Right ventricle myocardium inferior (tissue), 1 donor: ENCODE measurements at regions of chr4 and their contacts with region 1.

Region 1: DNA sequence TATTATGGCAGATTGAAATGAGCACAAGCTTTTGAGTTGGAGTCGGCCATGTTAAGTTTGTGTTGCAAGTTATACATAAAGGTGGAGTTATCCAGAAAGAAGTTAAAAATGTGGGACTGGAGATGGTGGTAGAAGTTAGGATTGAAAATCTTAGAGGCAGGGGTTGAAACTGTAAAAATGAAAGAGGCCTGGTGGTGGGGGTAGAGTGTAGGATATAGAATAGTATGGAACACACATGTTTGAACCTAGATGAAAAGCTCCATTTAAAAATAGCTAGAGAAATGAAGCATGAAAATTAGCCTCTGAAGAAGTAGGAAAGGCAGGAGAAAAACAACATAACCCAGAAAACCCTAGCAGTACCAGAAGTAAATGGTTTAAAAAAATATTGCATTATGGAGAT is 131.8 kb upstream of the ENPEP start:
- DNase-seq: no peak
- ATAC-seq: no peak

Region 2: GRCh38 chr4:110106928-110107296 is 237.2 kb before region 1 on chr4:
- intact Hi-C with region 1: no loop called
- DNase-seq: no peak
- ATAC-seq: no peak

Region 3: GRCh38 chr4:110510955-110511544 is 166.9 kb after region 1 on chr4:
- intact Hi-C with region 1: loop called (anchors 2 kb)
- DNase-seq: no peak
- ATAC-seq: peak; percentile 48